H1 (cell line): ENCODE measurements at regions of chr17 and their contacts with region 1.

Region 1: DNA sequence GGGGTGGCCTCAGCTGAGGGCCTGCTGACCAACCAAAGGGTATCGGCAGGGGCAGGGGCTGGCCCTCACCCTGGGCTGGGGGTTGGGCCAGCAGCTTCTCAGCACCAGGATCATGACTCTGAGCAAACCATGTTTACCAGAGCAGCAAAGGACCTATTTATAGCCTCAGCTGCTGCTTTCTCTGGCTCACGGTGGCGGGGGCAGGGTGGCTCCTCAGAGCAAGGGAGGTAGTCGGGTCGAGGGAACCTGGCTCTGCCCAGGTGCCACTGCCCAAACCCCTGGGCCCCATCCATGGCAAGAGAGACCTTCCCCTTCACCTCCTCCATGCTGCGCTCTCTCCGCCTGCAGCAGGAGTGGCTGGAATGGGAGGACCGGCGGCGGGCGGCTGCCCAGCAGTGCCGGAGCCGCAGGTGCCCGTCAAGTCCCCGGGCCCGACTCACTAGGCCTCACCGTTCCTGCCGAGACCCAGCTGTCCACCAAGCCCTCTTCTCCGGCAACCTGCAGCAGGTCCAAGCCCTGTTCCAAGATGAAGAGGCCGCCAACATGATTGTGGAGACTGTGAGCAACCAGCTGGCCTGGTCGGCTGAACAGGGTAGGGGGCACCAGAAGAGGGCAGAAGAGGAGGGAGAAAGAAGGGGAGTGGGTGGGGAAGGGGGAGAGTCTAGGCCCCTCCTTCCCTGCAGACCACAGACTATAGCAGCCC is at the start of gene ASB16:
- DNase-seq: no peak
- H3K4me3 ChIP-seq: peak within 1 kb of the TSS in 2 of 4 experiments; percentile 14 to 16; a peak in 4 of 8 replicates
- H3K27ac ChIP-seq: peak within 1 kb of the TSS; percentile 56; the same call in 1 of the 2 replicates
- H3K4me1 ChIP-seq: peaks cover 0 to 15% (median 8%) of the 10 kb centered on the region in 4 experiments; a peak in 5 of 7 replicates
- H3K27me3 ChIP-seq: no peaks in the 10 kb centered on the region
- CTCF ChIP-seq: peak; percentile 36 to 42 (median 41); a peak in 3 of 4 replicates
- EP300 ChIP-seq: no peak
- POLR2A ChIP-seq: no peak
- RAD21 ChIP-seq: peak; percentile 52 to 58; a peak in 3 of 4 replicates
- total RNA-seq, gene ASB16: 0.19 TPM in 1 of 2 replicates, not detected in the other

Region 2: DNA sequence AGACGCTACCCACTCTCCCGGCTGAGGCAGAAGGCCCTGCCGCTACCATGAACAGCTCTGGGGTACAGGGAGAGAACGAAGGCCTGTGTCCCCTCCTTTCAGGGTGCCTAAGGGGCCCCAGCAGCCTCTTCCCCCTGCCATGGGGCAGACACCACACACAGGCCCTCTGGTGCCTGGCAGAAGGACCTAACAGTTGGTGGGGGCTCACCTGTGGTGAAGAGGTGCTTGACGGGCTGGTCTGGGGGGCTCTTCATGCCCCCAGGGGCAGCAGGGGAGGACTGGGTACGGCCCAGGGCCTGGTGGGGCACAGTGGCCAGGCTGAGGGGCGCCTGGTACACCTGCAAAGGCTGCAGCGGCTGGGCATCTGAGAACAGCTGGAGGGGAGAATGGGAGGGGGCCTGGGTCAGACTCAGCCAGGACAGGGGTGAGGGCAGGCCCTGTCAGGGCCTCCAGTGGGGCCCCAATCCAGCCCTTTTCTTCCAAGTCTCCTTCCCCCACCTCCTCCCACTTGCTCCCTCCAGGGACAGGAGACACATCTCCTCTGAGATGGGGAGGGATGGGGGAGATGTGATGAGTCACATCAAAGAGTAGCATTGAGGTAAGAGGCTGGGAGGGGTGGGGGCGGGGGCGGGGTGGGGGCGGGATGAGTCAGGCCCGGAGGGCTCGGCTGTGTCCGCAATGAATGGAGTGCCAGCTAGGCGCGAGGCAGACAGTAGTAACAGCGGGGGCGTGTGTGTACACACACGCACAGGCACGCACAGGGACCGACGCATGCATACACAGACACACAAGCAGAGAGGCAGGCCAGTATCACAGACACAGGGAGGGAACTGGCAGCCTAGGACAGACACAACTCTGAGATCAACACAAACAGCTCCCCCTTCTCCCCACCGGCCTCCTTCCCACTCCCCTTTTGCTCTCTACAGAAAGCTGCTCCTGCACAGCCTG is 84.0 kb before region 1 on chr17:
- CTCF ChIA-PET with region 1: interaction called, 21 read pairs
- POLR2A ChIA-PET with region 1: interaction called, 5 read pairs
- DNase-seq: no peak
- H3K4me3 ChIP-seq: peak overlapping the region in 3 of 4 experiments; percentile 19 to 46 (median 24); a peak in 5 of 8 replicates
- H3K27ac ChIP-seq: peak overlapping the region; percentile 70
- H3K4me1 ChIP-seq: peaks cover 3 to 18% (median 12%) of the 10 kb centered on the region in 4 experiments
- H3K27me3 ChIP-seq: no peaks in the 10 kb centered on the region
- CTCF ChIP-seq: no peak
- EP300 ChIP-seq: no peak
- POLR2A ChIP-seq: no peak
- RAD21 ChIP-seq: no peak

Region 3: DNA sequence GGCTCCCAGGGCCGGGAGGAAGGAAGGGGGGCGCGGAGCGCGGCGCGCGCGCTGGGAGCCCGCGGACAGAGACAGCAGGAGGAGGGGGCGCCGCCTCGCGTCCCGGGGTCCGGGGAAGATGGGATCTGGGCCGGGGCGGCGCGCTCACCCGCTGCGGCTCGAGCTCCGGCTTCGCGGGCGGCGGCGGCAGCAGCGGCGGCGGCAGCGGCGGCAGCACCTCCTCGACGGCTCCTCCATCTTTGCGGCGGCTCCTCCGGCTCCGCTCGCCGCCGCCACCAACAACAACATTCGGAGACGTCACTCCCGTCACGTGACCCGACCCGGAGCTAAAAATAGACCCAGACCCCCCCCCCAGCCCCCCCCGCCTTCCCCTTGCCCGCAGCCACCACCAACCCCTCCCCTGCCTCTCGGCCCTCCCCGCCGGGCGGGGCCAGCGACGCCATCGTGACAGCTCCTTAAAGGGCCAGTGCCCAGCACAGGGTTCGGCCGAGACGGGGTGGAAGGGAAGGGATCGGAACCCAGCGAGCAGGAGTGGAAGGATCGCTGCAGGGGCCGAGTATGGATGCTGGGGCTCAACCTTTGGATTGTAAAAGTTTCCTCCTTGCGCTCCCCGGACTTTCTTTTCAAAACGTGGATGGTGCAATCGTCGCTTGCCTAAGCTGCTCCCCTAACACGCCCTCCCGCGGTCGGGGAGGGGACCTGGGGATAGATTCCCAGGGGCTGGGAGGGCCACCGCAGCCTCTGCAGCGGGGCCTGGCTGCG is 47.1 kb before region 1 on chr17 and contains the start of gene HDAC5:
- CTCF ChIA-PET with region 1: interaction called, 61 read pairs
- POLR2A ChIA-PET with region 1: interaction called, 5 read pairs
- DNase-seq: peak; percentile 72 to 93
- H3K4me3 ChIP-seq: peak within 1 kb of the TSS; percentile 77 to 99 (median 88)
- H3K27ac ChIP-seq: peak within 1 kb of the TSS; percentile 89
- H3K4me1 ChIP-seq: peaks cover 14 to 26% (median 18%) of the 10 kb centered on the region in 4 experiments
- H3K27me3 ChIP-seq: no peaks in the 10 kb centered on the region
- CTCF ChIP-seq: peak; percentile 19 to 57 (median 52); a peak in 3 of 4 replicates
- EP300 ChIP-seq: no peak
- POLR2A ChIP-seq: peak in 1 of 2 experiments; percentile 38; a peak in 2 of 3 replicates
- RAD21 ChIP-seq: peak; percentile 11 to 25; a peak in 2 of 4 replicates
- total RNA-seq, gene HDAC5: 48.5 and 54.0 TPM in 2 replicates

Region 4: GRCh38 chr17:44159519-44160210 is 11.0 kb before region 1 on chr17:
- CTCF ChIA-PET with region 1: interaction called, 25 read pairs
- POLR2A ChIA-PET with region 1: interaction called, 11 read pairs
- DNase-seq: no peak
- H3K4me3 ChIP-seq: no peak overlapping the region
- H3K27ac ChIP-seq: no peak overlapping the region
- H3K4me1 ChIP-seq: no peaks in the 10 kb centered on the region
- H3K27me3 ChIP-seq: no peaks in the 10 kb centered on the region
- CTCF ChIP-seq: no peak
- EP300 ChIP-seq: no peak
- POLR2A ChIP-seq: no peak
- RAD21 ChIP-seq: no peak

Region 5: DNA sequence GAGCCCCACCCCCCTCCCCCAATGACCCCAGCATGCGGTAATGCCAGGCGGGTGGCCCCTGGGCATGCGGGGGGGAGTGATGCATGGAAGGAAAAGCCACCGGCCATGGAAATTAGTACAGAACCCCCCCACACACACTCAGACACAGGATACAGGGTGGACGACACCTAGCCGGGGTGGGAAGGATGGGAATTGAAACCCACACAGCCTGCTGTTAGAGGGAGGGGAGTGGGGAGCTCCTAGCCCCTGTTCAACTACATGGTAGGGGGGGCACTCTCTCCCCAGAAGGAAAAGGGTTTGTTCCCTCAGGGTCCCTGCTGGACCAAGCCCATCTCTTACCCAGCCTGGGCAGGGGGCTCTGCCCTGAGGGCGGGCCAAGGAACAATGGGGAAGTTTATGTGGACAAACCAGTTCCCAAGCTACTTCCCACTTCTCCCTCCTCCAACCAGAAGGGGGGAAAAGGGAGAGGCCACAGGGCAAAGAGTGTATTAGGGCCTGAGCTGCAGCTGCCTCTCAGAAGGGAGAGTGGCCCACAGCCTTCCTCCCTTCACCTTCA is 21.4 kb after region 1 on chr17:
- CTCF ChIA-PET with region 1: interaction called, 36 read pairs
- POLR2A ChIA-PET with region 1: interaction called, 84 read pairs
- DNase-seq: peak; percentile 44 to 69
- H3K4me3 ChIP-seq: peak overlapping the region in 3 of 4 experiments; percentile 23 to 28 (median 28); a peak in 3 of 8 replicates
- H3K27ac ChIP-seq: no peak overlapping the region
- H3K4me1 ChIP-seq: peaks cover 0 to 12% (median 9%) of the 10 kb centered on the region in 4 experiments; a peak in 6 of 7 replicates
- H3K27me3 ChIP-seq: no peaks in the 10 kb centered on the region
- CTCF ChIP-seq: no peak
- EP300 ChIP-seq: no peak
- POLR2A ChIP-seq: peak in 1 of 2 experiments; percentile 68; a peak in 1 of 3 replicates
- RAD21 ChIP-seq: no peak

Region 6: GRCh38 chr17:44308320-44308818 is 137.7 kb after region 1 on chr17 and contains the start of gene RUNDC3A:
- CTCF ChIA-PET with region 1: no interaction called
- POLR2A ChIA-PET with region 1: no interaction called
- DNase-seq: peak in 1 of 2 experiments; percentile 99
- H3K4me3 ChIP-seq: peak within 1 kb of the TSS; percentile 43 to 67 (median 54)
- H3K27ac ChIP-seq: no peak within 1 kb of the TSS
- H3K4me1 ChIP-seq: peaks cover 7 to 38% (median 26%) of the 10 kb centered on the region in 4 experiments
- H3K27me3 ChIP-seq: no peaks in the 10 kb centered on the region; a peak in 2 of 7 replicates
- CTCF ChIP-seq: no peak
- EP300 ChIP-seq: no peak
- POLR2A ChIP-seq: peak in 1 of 2 experiments; percentile 46; a peak in 1 of 3 replicates
- RAD21 ChIP-seq: no peak
- total RNA-seq, gene RUNDC3A: 6.1 and 6.4 TPM in 2 replicates